Common myeloid progenitor, CD34-positive (primary cell): ENCODE measurements at regions of chr1 and their contacts with region 1.

Region 1: DNA sequence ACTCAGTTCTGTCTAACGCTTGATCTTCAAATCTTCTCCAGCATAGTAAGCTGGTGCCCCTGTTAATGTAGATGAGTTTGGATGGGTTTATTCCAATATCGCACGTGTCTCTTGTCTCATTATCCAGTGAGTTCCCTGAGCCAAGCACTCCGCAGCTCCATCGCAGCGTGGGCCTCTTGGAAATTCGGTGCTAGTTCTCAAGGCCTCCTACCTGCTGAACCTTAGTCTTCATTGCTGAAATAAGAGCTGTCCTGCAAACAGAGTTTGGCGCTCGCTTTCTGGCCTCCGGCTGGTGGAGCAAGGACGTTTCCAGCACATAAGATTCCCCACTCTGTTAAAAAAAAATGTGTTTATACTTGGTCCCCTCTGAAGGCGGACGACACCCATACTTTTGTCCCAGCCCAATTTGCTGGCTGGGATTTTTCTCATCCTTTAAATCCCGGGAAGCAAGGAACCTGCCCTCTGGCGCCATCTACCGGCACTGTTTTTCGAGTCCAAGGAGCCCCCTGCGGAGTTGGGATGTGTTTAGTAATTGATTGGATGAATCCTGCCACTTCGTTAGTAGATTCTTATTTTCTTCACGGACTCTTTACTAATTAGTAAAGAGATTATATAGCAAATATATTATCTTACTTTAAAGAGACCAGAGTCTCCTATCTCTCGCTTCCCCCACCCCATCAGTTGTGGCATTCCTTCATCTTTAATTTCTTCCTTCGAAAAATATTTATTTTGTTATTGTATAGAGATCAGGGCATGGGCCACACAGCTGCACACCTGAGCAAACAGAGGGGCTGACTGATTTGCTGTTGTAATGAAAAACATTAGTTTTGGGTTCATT is 14.7 kb downstream of the JUN start:
- DNase-seq: peak in 1 of 3 donors; percentile 38
- H3K4me3 ChIP-seq: no peak overlapping the region
- H3K27ac ChIP-seq: no peak overlapping the region
- H3K4me1 ChIP-seq: peaks cover 9 to 25% (median 15%) of the 10 kb centered on the region in 4 experiments
- H3K27me3 ChIP-seq: no peaks in the 10 kb centered on the region

Region 2: GRCh38 chr1:58652651-58653184 is 116.5 kb before region 1 on chr1:
- CTCF ChIA-PET with region 1: no interaction called
- POLR2A ChIA-PET with region 1: no interaction called
- DNase-seq: peak; percentile 77 to 91 (median 87)
- H3K4me3 ChIP-seq: no peak overlapping the region
- H3K27ac ChIP-seq: no peak overlapping the region
- H3K4me1 ChIP-seq: peaks cover 0 to 17% (median 6%) of the 10 kb centered on the region in 4 experiments
- H3K27me3 ChIP-seq: no peaks in the 10 kb centered on the region

Region 3: DNA sequence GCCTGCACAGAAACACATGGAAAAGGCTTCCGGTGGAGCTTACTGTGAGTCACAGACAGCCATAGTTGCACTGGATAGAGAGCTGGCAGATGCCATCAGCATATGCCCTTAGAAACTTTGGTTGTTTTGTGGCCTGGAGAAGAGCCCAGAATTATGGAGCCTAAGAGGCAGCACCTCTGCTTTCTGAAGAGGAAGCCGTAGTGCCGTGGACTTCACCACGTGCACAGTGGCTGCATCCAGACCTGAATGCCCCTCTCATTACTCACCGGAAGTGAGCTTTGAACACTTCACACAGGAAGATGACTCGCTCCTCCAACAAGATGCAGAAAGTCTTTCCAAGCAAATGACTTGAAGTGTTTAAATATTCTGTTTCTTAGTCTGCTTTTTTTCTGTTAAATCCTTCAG is 13.7 kb before region 1 on chr1:
- CTCF ChIA-PET with region 1: interaction called, 12 read pairs
- POLR2A ChIA-PET with region 1: interaction called, 4 read pairs
- DNase-seq: peak; percentile 88 to 98 (median 95)
- H3K4me3 ChIP-seq: peak overlapping the region in 1 of 7 experiments; percentile 30
- H3K27ac ChIP-seq: peak overlapping the region in 1 of 2 experiments; percentile 50
- H3K4me1 ChIP-seq: peaks cover 16 to 51% (median 32%) of the 10 kb centered on the region in 4 experiments
- H3K27me3 ChIP-seq: no peaks in the 10 kb centered on the region

Region 4: GRCh38 chr1:58783993-58784757 is 15.0 kb after region 1 on chr1 and contains the start of gene JUN:
- CTCF ChIA-PET with region 1: interaction called, 10 read pairs
- POLR2A ChIA-PET with region 1: interaction called, 3 read pairs
- DNase-seq: peak; percentile 99
- H3K4me3 ChIP-seq: peak within 1 kb of the TSS; percentile 67 to 98 (median 89)
- H3K27ac ChIP-seq: peak within 1 kb of the TSS; percentile 79 to 93
- H3K4me1 ChIP-seq: peaks cover 0 to 38% (median 34%) of the 10 kb centered on the region in 4 experiments
- H3K27me3 ChIP-seq: peaks cover 0 to 34% (median 17%) of the 10 kb centered on the region in 5 experiments

Region 5: DNA sequence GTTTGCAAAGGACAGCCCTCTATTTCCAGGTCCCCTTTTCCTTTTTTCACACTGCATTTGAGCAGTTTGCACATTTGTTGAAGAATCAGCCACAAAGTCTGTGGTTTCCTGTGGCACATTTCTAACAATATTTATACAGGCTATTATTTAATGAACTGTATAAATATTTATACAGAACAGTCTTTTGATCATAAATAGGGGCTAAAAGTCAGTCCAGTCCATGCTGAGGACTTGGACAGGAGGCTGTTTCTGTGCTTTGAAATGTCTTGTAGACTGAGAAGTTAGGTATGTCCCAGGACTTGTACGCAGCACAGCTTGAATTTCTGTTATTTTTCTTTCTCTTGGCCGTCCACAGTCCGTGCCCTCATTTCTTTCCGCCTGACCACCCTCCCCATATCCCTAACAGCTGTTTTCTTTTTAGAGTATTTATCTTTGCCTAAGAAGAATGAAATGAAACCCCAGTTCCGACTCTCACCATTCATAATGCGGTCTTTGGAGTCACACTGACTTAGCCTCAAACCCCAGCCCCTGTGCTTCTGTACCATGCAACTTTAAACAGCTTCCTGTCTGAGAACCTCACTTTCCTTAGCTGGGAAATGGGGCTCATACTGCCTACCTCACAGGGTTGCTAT is 547.4 kb after region 1 on chr1:
- CTCF ChIA-PET with region 1: no interaction called
- POLR2A ChIA-PET with region 1: no interaction called
- DNase-seq: peak in 2 of 3 donors; percentile 17 to 36
- H3K4me3 ChIP-seq: no peak overlapping the region
- H3K27ac ChIP-seq: no peak overlapping the region
- H3K4me1 ChIP-seq: peaks cover 0 to 21% (median 14%) of the 10 kb centered on the region in 4 experiments
- H3K27me3 ChIP-seq: no peaks in the 10 kb centered on the region